ENCODE measurements at regions of chr3 and their contacts with region 1.

Region 1: GRCh38 chr3:34140616-34141015 is 342.2 kb downstream of the PDCD6IP start:
- DNase-seq: peak; percentile 63
- H3K4me3 Mint-ChIP-seq: no peak overlapping the region
- H3K27ac Mint-ChIP-seq: no peak overlapping the region
- H3K4me1 Mint-ChIP-seq: no peaks in the 10 kb centered on the region
- H3K27me3 Mint-ChIP-seq: peaks cover 12% of the 10 kb centered on the region
- CTCF ChIP-seq: no peak

Region 2: DNA sequence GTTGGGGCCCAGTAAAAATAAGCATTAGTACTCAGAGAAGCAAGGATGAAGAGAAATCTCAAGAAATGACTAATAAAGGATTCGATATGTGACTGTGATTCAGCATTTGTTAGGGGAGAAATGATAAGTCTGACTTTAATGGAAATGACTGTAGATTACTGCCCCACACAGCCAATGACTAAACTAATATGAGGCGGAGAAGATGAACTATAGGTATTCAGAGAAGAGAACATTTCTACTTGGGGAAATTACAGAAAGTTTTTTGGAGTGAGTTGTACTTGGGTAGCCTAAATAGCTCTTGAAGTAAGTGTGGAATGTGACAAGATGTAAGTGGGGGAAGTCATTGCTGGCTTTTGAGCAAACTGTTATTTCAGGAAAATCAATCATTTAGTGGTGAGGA is 37.8 kb after region 1 on chr3:
- CTCF ChIA-PET with region 1: no interaction called
- POLR2A ChIA-PET with region 1: no interaction called
- intact Hi-C with region 1: loop called (anchors 5 kb)
- DNase-seq: no peak
- H3K4me3 Mint-ChIP-seq: no peak overlapping the region
- H3K27ac Mint-ChIP-seq: no peak overlapping the region
- H3K4me1 Mint-ChIP-seq: no peaks in the 10 kb centered on the region
- H3K27me3 Mint-ChIP-seq: peaks cover 66% of the 10 kb centered on the region
- CTCF ChIP-seq: no peak

Region 3: GRCh38 chr3:34382859-34383258 is 242.2 kb after region 1 on chr3:
- CTCF ChIA-PET with region 1: no interaction called
- POLR2A ChIA-PET with region 1: no interaction called
- intact Hi-C with region 1: no loop called
- DNase-seq: peak; percentile 56
- H3K4me3 Mint-ChIP-seq: no peak overlapping the region
- H3K27ac Mint-ChIP-seq: no peak overlapping the region
- H3K4me1 Mint-ChIP-seq: no peaks in the 10 kb centered on the region
- H3K27me3 Mint-ChIP-seq: no peaks in the 10 kb centered on the region
- CTCF ChIP-seq: no peak

Measured in MCF 10A (cell line).